Activated CD4-positive, alpha-beta T cell treated with anti-CD3 and anti-CD28 coated beads, Interleukin-2, amount 10 ng/mL, durations not matched to agents 7 days and 5 days (primary cell): ENCODE measurements at regions of chr16 and their contacts with region 1.

Region 1: DNA sequence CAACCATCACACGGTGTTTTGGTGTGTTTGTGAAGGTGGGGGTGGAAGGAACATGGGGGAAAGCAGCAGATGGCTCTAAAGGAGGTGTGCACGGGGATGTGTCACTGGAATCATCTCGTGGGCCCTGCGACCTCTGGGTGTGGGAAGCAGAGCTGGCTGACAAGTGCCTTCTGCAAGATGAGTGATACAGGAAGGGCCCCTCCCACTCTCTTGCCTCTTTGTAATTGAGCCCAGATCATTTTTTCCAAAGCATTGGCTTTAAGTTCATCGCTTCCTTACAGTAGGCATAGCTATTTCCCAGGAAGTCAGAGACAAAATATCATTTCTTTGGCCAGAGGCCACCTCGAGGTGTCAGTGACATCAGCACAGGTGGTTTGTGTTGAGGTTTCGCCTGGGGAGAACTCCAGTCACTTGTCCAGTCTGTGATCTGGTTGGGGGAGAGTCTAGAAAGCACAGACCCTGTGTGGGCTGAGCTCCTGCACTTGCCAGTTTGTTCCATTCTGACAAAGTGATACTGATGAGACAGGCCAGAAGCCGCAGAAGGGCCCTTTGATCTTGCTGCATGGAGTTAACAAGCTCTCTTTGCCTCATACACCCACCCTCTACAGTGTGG is 20.6 kb upstream of the SNTB2 start:
- DNase-seq: peak; percentile 65
- H3K4me3 Mint-ChIP-seq: no peak overlapping the region
- H3K27ac Mint-ChIP-seq: peak overlapping the region; percentile 74
- H3K4me1 Mint-ChIP-seq: peaks cover 37% of the 10 kb centered on the region
- H3K27me3 Mint-ChIP-seq: no peaks in the 10 kb centered on the region

Region 2: DNA sequence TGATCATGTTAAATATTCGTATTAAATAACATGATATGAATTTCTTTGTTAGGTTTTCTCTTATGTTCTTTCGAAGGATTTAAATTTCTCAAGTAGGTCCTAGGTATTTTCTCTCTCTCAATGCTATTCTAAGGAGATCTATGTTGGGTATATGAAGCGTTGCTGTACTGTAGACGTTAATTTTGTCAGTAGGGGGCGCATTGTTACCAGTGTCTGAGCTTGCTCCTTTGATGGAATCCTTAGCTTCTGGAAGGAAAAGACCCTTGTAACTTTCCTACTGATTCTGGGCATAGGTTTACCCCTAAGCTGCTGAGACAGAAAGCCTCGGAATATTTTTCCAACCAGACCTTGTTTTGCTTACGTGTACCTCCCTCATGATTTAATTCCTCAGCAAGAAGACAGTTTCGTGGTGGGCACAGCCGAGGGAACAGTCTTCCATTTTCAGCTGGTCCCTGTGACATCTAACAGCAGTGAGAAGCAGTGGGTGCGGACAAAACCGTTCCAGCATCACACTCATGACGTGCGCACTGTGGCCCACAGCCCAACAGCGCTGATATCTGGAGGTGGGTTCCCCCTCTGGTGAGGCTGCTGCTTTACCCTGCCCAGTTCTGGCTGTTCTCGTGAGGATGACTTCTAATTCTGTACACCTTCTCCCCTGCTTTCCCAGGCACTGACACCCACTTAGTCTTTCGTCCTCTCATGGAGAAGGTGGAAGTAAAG is 16.0 kb before region 1 on chr16:
- CTCF ChIA-PET with region 1: interaction called, 10 read pairs
- POLR2A ChIA-PET with region 1: no interaction called
- DNase-seq: peak; percentile 76
- H3K4me3 Mint-ChIP-seq: no peak overlapping the region
- H3K27ac Mint-ChIP-seq: no peak overlapping the region
- H3K4me1 Mint-ChIP-seq: no peaks in the 10 kb centered on the region
- H3K27me3 Mint-ChIP-seq: no peaks in the 10 kb centered on the region

Region 3: DNA sequence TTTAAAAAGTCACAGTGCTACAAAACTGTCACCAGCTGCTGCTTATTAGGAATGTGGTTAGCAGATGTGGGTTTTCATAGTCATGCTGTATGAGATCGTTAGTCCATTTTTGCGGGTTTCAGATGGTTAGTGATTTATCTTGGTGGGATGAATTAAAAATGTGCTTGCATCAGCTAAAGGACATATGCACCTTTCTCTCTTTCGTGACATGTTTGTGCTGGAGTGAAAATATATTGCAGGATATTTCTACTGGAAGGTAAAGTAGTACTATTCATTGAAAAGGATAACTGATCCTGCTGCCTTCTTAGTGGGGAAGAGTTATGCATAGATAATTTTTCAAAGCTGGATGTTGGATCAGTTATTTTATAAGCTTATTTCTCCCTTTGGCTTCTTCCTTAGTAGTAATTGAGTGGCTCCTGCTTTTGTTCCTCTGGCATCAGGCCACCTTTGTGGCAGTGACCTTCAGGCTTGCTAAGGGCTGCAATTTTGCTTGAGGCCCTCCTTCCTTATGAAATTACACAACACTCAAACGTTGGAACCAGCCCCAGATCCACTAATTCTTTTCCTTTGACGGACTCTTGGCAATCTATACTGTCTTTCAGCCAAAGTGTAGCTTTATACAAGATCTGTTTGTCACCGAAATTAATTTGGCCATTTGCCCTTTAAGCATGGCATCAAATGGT is 13.1 kb after region 1 on chr16:
- CTCF ChIA-PET with region 1: interaction called, 34 read pairs
- POLR2A ChIA-PET with region 1: interaction called, 3 read pairs
- DNase-seq: no peak
- H3K4me3 Mint-ChIP-seq: no peak overlapping the region
- H3K27ac Mint-ChIP-seq: no peak overlapping the region
- H3K4me1 Mint-ChIP-seq: peaks cover 3% of the 10 kb centered on the region
- H3K27me3 Mint-ChIP-seq: no peaks in the 10 kb centered on the region